HCT116 (cell line): ENCODE measurements at regions of chr2 and their contacts with region 1.

Region 1: DNA sequence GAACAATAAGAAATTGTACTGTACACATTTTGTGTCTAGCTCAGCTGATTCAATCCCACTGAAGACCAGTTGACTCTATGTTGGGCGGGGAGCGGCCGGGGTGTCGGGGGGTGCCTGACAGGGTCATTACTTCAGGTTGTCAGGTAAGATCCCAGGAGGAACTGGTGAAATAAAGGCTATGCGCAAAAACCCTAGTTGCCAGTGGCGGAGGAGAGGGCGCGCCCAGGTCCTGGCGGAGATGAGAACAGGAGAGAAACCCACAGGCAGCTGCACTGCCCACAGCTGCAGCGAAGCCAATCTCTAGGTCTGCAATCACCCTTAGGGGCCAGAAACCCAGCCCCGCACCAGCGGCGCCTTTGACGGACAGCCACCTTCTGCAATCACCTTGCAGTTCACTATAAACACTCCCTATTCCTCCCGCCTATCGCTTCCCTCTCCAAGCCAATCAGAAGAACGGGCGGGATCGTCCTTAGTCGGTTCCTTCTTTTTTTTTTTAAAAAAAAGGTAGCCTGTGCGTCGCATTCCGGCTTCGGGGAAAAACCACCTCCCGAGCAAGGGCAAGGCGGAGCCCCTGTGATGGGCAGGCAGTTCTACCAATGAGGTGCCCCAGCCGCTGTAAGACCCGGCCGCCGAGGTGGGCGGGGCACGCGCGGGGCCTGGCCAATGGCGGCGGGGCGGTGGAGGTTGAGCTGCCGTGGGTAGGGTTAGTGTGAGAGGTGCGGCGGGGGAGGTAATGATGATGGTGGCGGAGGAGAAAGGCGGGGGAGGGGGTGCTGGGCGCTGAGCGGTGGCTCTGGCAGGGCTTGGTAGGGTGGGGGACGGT is at the start of gene EHBP1:
- DNase-seq: peak; percentile 100
- ATAC-seq: peak; percentile 93
- H3K4me3 ChIP-seq: peak within 1 kb of the TSS; percentile 79 to 80
- H3K27ac ChIP-seq: peak within 1 kb of the TSS; percentile 69
- H3K4me1 ChIP-seq: peaks cover 8 to 33% of the 10 kb centered on the region in 2 experiments
- H3K27me3 ChIP-seq: no peaks in the 10 kb centered on the region
- CTCF ChIP-seq: no peak
- POLR2A ChIP-seq: peak; percentile 64
- RAD21 ChIP-seq: no peak
- total RNA-seq, gene EHBP1: 89.9 TPM

Region 2: DNA sequence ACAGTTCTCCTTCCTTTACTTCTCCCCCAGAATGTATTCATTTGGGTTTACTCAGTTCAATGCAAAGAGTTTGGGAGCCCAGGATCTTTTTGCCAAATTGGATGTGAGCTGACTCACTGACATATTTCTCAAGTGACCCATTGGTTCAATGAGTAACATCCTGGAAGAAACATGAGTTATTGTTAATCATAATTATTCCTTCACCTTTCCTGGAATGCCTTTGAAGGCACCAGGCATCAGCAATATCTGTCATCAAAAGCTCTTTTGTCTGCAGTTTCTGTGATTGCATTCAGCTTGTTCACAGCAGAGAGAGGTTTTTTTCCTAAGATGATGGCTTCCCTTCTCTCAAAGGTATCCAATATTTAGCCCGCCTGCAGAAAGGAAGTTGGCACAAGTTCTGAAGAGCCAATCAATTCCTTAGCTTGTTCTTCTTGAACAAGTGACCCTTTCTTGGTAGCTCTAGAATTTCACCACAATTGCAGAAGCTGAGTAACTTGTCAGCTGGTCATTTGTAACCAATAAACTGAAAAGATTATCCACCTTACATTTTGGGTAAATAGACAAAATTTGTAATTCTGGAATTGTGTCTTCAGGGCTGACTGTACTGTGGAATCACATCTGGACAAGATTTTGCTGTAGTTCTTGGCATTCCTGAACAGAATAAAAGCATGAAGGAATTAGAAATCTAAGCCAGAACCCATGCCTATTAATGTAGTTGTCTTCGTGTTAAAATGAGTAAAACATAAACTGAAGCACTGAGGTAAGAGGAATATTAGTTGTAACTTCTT is 127.0 kb before region 1 on chr2:
- CTCF ChIA-PET with region 1: no interaction called
- POLR2A ChIA-PET with region 1: interaction called, 13 read pairs
- RAD21 ChIA-PET with region 1: interaction called in 1 of 2 experiments, 3 read pairs
- intact Hi-C with region 1: loop called (anchors 2 kb)
- DNase-seq: peak; percentile 99
- ATAC-seq: peak; percentile 80
- H3K4me3 ChIP-seq: peak overlapping the region in 1 of 2 experiments; percentile 28; a peak in 2 of 4 replicates
- H3K27ac ChIP-seq: peak overlapping the region; percentile 98
- H3K4me1 ChIP-seq: peaks cover 44 to 54% of the 10 kb centered on the region in 2 experiments
- H3K27me3 ChIP-seq: no peaks in the 10 kb centered on the region
- CTCF ChIP-seq: no peak
- POLR2A ChIP-seq: no peak
- RAD21 ChIP-seq: peak; percentile 54

Region 3: DNA sequence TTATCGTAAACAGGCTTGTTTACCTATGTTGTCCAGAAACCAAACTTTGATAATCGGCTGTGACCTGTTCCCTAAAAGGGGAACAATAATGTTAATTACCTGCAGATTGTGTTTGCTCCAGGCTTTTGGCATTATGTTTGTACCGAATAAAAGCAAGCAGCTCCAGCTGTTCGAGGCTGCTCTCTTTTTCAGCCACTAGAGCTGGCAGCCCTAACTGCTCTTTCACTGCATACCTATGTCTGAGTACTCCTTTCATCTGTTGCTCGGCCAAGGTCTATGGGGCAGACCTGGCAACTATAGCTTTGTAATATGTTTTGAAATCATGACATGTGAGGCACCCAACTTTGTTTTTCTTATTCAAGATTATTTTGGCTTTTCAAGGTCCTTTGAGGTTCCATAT is 77.6 kb before region 1 on chr2:
- CTCF ChIA-PET with region 1: no interaction called
- POLR2A ChIA-PET with region 1: no interaction called
- RAD21 ChIA-PET with region 1: no interaction called
- intact Hi-C with region 1: no loop called
- DNase-seq: no peak
- ATAC-seq: no peak
- H3K4me3 ChIP-seq: no peak overlapping the region
- H3K27ac ChIP-seq: no peak overlapping the region
- H3K4me1 ChIP-seq: no peaks in the 10 kb centered on the region
- H3K27me3 ChIP-seq: no peaks in the 10 kb centered on the region
- CTCF ChIP-seq: no peak
- POLR2A ChIP-seq: no peak
- RAD21 ChIP-seq: no peak